ENCODE measurements at regions of chr9 and their contacts with region 1.

Region 1: GRCh38 chr9:90359264-90359663 is 283.4 kb downstream of the DIRAS2 start:
- DNase-seq: no peak
- H3K4me3 ChIP-seq: no peak overlapping the region
- H3K27ac ChIP-seq: no peak overlapping the region
- H3K4me1 ChIP-seq: no peaks in the 10 kb centered on the region
- H3K27me3 ChIP-seq: no peaks in the 10 kb centered on the region
- CTCF ChIP-seq: no peak
- POLR2A ChIP-seq: no peak

Region 2: GRCh38 chr9:89839449-89839848 is 519.8 kb before region 1 on chr9:
- intact Hi-C with region 1: loop called (anchors 5 kb)
- DNase-seq: no peak
- H3K4me3 ChIP-seq: no peak overlapping the region
- H3K27ac ChIP-seq: no peak overlapping the region
- H3K4me1 ChIP-seq: no peaks in the 10 kb centered on the region
- H3K27me3 ChIP-seq: no peaks in the 10 kb centered on the region
- CTCF ChIP-seq: no peak
- POLR2A ChIP-seq: no peak